ENCODE measurements at regions of chr13 and their contacts with region 1.

Region 1: DNA sequence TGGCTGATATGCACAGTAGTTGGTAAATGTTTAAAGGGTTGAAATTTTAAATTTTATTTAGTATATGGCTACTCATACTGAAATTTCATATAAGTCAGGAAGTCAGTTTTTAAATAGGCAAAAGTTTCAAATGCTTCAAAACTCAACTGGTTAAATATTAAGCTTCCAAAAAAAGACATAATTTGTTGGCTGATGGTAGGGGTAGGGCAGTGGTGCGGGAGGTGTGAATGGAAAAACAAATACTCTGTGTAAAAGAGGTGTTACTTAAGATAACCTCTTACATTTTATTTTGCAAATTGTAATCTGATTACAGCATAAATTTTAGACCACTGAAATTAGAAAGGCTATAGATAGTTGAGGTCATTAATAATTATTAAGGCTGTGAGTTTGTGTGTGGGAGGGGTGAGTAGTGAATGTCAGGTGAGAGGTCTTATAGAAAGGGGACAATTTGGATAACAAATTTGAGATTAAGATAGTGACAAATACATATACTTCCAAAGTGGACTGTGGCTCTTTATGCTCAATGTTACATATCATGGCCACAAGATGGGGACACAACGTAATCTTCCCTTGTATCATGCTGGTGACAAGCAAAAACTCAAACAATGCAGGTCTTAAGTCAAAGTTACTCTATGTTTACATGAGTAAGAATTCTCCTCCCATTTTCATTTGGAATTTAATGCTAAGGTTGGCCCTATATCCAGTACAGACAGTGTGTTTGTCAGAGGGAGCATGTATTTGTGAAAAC is 36.6 kb upstream of the OXGR1 start:
- DNase-seq: no peak
- H3K4me3 ChIP-seq: no peak overlapping the region
- H3K27ac ChIP-seq: no peak overlapping the region
- H3K4me1 ChIP-seq: peaks cover 0 to 3% of the 10 kb centered on the region in 2 donors
- H3K27me3 ChIP-seq: no peaks in the 10 kb centered on the region
- CTCF ChIP-seq: no peak

Region 2: DNA sequence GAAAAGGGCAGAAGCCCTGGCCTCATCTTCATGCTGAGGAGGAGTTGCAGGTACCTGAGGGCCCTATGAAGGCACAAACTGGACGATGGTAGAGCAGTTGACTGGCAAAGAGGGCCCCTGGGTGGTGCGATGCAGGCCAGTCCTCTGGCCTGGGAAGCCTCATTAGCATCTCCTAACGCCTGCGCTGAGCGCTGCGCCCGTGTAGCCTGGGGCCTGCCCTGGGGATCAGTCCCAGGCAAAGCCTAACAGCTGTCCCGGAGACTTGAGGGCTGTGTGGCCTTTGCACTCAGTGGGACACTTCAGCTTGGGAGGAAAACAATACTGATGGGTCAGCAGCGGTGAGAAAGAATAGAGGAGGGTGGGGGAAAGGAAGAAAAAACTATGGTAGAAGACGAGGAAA is 590.8 kb after region 1 on chr13:
- intact Hi-C with region 1: no loop called
- DNase-seq: no peak
- H3K4me3 ChIP-seq: no peak overlapping the region
- H3K27ac ChIP-seq: no peak overlapping the region
- H3K4me1 ChIP-seq: no peaks in the 10 kb centered on the region
- H3K27me3 ChIP-seq: no peaks in the 10 kb centered on the region
- CTCF ChIP-seq: no peak

Region 3: GRCh38 chr13:97809576-97809975 is 778.7 kb after region 1 on chr13:
- intact Hi-C with region 1: loop called (anchors 10 kb)
- DNase-seq: no peak
- H3K4me3 ChIP-seq: no peak overlapping the region
- H3K27ac ChIP-seq: no peak overlapping the region
- H3K4me1 ChIP-seq: peaks cover 0 to 3% of the 10 kb centered on the region in 2 donors
- H3K27me3 ChIP-seq: no peaks in the 10 kb centered on the region
- CTCF ChIP-seq: no peak

Measured in ascending aorta (tissue), 2 donors.